ENCODE measurements at regions of chr19 and their contacts with region 1.

Region 1: GRCh38 chr19:19145684-19146608 is 7.7 kb upstream of the TMEM161A start:
- DNase-seq: peak; percentile 91
- ATAC-seq: peak; percentile 76

Region 2: GRCh38 chr19:18112989-18113478 is 1032.9 kb before region 1 on chr19:
- intact Hi-C with region 1: no loop called
- DNase-seq: peak; percentile 92
- ATAC-seq: peak; percentile 84

Region 3: GRCh38 chr19:19342756-19343322 is 196.9 kb after region 1 on chr19:
- intact Hi-C with region 1: loop called (anchors 5 kb)
- DNase-seq: peak; percentile 71
- ATAC-seq: peak; percentile 71

Measured in sciatic nerve (tissue), 2 donors.